Psoas muscle (tissue), 8 donors: ENCODE measurements at regions of chr11 and their contacts with region 1.

Region 1: DNA sequence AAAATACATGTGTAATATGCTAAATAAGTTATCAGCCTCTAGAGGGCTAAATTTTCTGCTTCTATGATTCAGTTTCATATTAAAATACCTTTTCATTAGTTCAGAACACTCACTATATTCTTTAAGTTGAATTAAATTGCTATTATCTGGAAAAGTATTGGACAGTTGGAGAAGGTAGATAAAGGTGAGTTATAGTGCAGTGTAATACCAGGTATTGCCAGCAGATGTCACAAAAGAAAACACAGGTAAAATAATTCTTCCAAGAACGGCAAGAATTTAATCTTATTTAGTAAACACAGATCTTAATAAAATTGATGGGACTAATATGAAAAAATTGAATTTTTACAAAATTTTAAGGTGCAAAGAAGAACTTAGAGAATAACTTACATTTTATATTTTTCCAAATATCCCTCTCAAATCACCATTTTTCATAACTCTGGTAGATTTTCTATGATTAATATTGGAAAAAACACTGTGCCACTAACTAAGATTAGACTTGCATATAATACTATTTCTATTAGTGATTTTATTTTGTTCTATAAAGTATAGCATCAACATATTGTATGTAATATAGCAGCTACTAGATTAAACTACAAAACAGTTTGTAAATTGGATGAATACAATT is 1.7 kb upstream of the LRRC4C start:
- DNase-seq: no peak
- ATAC-seq: no peak
- H3K4me3 ChIP-seq: no peak overlapping the region
- H3K27ac ChIP-seq: no peak overlapping the region
- H3K4me1 ChIP-seq: no peaks in the 10 kb centered on the region
- H3K27me3 ChIP-seq: no peaks in the 10 kb centered on the region
- CTCF ChIP-seq: peak; percentile 52

Region 2: GRCh38 chr11:40149721-40150120 is 1311.4 kb before region 1 on chr11:
- intact Hi-C with region 1: no loop called
- DNase-seq: no peak
- ATAC-seq: no peak
- H3K4me3 ChIP-seq: no peak overlapping the region
- H3K27ac ChIP-seq: no peak overlapping the region
- H3K4me1 ChIP-seq: no peaks in the 10 kb centered on the region
- H3K27me3 ChIP-seq: no peaks in the 10 kb centered on the region
- CTCF ChIP-seq: no peak

Region 3: DNA sequence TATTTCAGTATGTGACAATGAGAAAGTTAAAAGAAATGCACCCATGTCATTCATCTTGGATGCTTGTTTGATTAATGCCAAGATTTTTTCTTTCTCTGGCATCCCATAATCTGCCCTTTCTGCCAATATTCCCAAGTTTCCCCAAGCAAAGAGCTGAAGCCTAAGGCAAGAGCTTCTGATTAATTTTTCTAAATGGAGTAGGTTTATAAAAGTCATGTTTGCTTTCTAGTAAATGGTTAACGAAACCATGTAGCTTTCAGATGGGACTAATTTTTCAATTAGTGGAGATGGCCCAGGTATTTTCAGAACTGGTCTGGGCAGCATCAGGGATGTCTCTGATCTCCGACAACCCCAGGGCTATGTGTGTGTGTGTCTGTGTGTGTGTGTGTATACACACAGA is 57.1 kb before region 1 on chr11:
- intact Hi-C with region 1: no loop called
- DNase-seq: no peak
- ATAC-seq: no peak
- H3K4me3 ChIP-seq: no peak overlapping the region
- H3K27ac ChIP-seq: no peak overlapping the region
- H3K4me1 ChIP-seq: no peaks in the 10 kb centered on the region
- H3K27me3 ChIP-seq: no peaks in the 10 kb centered on the region
- CTCF ChIP-seq: no peak

Region 4: DNA sequence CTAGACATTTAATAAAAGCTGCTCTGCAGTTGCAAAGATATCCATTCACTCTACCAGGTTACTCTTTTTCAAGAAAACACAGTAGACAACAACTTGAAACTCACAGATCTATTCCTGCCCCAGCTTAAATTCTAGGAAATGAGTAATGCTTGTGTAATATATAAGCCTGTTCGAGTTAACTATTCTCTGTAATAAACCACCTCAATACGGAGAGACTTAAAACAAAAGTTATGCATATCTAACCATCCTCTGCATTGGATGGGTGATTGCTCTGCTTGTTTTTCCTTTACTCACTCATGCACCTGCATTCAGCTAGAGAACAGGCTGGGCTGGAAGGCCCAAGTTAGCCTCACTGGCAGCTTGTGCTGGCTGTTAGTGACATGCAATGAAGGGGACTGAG is 15.1 kb before region 1 on chr11:
- intact Hi-C with region 1: no loop called
- DNase-seq: no peak
- ATAC-seq: no peak
- H3K4me3 ChIP-seq: no peak overlapping the region
- H3K27ac ChIP-seq: no peak overlapping the region
- H3K4me1 ChIP-seq: no peaks in the 10 kb centered on the region
- H3K27me3 ChIP-seq: no peaks in the 10 kb centered on the region
- CTCF ChIP-seq: no peak

Region 5: GRCh38 chr11:41522391-41522790 is 61.2 kb after region 1 on chr11:
- intact Hi-C with region 1: no loop called
- DNase-seq: no peak
- ATAC-seq: no peak
- H3K4me3 ChIP-seq: no peak overlapping the region
- H3K27ac ChIP-seq: no peak overlapping the region
- H3K4me1 ChIP-seq: no peaks in the 10 kb centered on the region
- H3K27me3 ChIP-seq: no peaks in the 10 kb centered on the region
- CTCF ChIP-seq: no peak

Region 6: DNA sequence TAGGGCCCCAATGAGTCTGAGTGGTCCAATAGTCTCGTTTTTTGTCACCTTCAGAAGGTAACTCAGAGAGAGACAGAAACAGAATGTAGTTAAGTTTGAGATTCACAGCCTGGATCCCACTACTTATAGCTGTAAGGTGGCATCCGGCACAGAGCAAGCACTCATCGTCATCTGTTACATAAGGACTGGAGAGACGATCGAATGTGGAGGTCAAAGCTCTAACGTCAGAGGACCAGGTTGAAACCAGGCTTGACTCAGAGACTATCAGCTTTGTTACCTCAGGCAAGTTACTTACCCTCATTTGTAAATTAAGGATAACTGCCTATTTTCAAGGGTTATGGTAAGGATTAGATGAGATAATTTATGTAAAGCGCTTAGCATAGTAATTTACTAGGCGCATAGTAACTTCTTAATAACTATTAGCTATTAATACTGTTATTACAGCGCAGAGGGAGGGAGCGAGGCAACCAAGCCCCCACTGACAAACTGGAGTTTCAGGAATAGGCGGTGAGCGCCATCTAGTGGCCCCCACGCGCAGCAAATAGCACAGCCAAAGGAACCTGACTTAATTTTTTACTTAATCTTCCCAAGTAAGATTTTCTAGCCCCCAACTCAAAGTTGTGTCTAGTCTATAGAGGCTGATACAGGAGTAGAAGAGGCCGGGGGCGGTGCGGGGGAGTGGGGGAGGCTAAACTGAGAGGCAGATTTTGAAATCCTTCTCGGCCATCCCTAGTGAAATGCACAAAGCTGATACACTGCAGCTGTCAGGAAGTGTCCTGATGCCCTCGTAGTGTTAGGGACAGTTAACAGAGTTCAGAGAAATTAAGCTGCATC is 1821.7 kb after region 1 on chr11:
- intact Hi-C with region 1: loop called (anchors 5 to 10 kb)
- DNase-seq: peak in 1 of 2 donors; percentile 62
- ATAC-seq: peak in 1 of 4 donors; percentile 61
- H3K4me3 ChIP-seq: no peak overlapping the region
- H3K27ac ChIP-seq: no peak overlapping the region
- H3K4me1 ChIP-seq: no peaks in the 10 kb centered on the region
- H3K27me3 ChIP-seq: peaks cover 0 to 13% (median 0%) of the 10 kb centered on the region in 3 donors
- CTCF ChIP-seq: peak; percentile 80